Activated CD8-positive, alpha-beta T cell treated with anti-CD3 and anti-CD28 coated beads, Interleukin-2, amount 10 ng/mL, durations not matched to agents 7 days and 5 days (primary cell): ENCODE measurements at regions of chr20 and their contacts with region 1.

Region 1: DNA sequence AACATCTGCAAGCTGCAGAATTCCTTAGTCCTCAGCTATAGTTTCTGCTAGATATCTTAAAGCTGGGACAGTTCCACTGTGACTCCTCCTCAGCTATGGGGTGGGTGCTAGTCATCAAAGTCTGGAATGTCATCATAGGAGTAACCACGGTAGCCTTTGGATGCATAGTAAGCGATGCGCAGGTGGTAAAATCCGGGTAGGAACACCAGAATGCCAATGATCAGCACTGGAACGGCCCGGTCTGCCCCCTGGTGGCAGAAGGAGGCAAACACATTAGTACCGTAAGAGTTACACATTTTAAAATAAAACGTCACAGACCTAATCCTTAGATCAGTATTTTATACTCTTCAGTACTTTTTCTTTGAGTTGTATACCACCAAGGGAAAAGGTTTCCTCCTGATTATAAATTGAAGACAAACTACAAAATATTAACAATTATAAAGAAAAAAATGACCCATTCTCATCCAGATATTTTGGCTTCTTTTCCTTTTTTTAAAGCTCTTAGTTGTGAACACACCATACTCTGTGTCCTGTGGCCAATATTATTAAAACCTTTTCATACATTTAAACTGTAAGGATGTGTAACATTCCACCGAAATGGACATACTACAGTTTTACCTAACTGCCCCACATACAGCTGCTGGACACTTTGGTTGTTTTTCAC is 18.9 kb downstream of the PCNA start:
- DNase-seq: peak; percentile 79
- ATAC-seq: peak; percentile 84
- H3K4me3 Mint-ChIP-seq: no peak overlapping the region
- H3K27ac Mint-ChIP-seq: no peak overlapping the region
- H3K4me1 Mint-ChIP-seq: peaks cover 8% of the 10 kb centered on the region
- H3K27me3 Mint-ChIP-seq: no peaks in the 10 kb centered on the region

Region 2: GRCh38 chr20:4813863-4814695 is 286.7 kb before region 1 on chr20:
- CTCF ChIA-PET with region 1: interaction called, 10 read pairs
- POLR2A ChIA-PET with region 1: no interaction called
- DNase-seq: peak; percentile 81
- ATAC-seq: peak; percentile 74
- H3K4me3 Mint-ChIP-seq: peak overlapping the region; percentile 94
- H3K27ac Mint-ChIP-seq: peak overlapping the region; percentile 98
- H3K4me1 Mint-ChIP-seq: peaks cover 76% of the 10 kb centered on the region
- H3K27me3 Mint-ChIP-seq: no peaks in the 10 kb centered on the region

Region 3: GRCh38 chr20:5001174-5002076 is 99.4 kb before region 1 on chr20 and contains the start of gene SLC23A2:
- CTCF ChIA-PET with region 1: interaction called, 12 read pairs
- POLR2A ChIA-PET with region 1: no interaction called
- DNase-seq: peak; percentile 58
- ATAC-seq: peak; percentile 89
- H3K4me3 Mint-ChIP-seq: peak within 1 kb of the TSS; percentile 85
- H3K27ac Mint-ChIP-seq: peak within 1 kb of the TSS; percentile 90
- H3K4me1 Mint-ChIP-seq: peaks cover 29% of the 10 kb centered on the region
- H3K27me3 Mint-ChIP-seq: peaks cover 10% of the 10 kb centered on the region
- total RNA-seq, gene SLC23A2: 14.7 to 16.7 TPM

Region 4: GRCh38 chr20:5056801-5057599 is 43.8 kb before region 1 on chr20:
- CTCF ChIA-PET with region 1: interaction called, 139 read pairs
- POLR2A ChIA-PET with region 1: interaction called, 9 read pairs
- DNase-seq: peak; percentile 90
- ATAC-seq: peak; percentile 100
- H3K4me3 Mint-ChIP-seq: no peak overlapping the region
- H3K27ac Mint-ChIP-seq: peak overlapping the region; percentile 87
- H3K4me1 Mint-ChIP-seq: peaks cover 31% of the 10 kb centered on the region
- H3K27me3 Mint-ChIP-seq: peaks cover 1% of the 10 kb centered on the region

Region 5: GRCh38 chr20:5078399-5078958 is 22.3 kb before region 1 on chr20:
- CTCF ChIA-PET with region 1: interaction called, 36 read pairs
- POLR2A ChIA-PET with region 1: no interaction called
- DNase-seq: peak; percentile 93
- ATAC-seq: peak; percentile 98
- H3K4me3 Mint-ChIP-seq: peak overlapping the region; percentile 76
- H3K27ac Mint-ChIP-seq: peak overlapping the region; percentile 97
- H3K4me1 Mint-ChIP-seq: peaks cover 56% of the 10 kb centered on the region
- H3K27me3 Mint-ChIP-seq: no peaks in the 10 kb centered on the region